Cardiac septum (tissue), 1 donor: ENCODE measurements at regions of chr22 and their contacts with region 1.

Region 1: DNA sequence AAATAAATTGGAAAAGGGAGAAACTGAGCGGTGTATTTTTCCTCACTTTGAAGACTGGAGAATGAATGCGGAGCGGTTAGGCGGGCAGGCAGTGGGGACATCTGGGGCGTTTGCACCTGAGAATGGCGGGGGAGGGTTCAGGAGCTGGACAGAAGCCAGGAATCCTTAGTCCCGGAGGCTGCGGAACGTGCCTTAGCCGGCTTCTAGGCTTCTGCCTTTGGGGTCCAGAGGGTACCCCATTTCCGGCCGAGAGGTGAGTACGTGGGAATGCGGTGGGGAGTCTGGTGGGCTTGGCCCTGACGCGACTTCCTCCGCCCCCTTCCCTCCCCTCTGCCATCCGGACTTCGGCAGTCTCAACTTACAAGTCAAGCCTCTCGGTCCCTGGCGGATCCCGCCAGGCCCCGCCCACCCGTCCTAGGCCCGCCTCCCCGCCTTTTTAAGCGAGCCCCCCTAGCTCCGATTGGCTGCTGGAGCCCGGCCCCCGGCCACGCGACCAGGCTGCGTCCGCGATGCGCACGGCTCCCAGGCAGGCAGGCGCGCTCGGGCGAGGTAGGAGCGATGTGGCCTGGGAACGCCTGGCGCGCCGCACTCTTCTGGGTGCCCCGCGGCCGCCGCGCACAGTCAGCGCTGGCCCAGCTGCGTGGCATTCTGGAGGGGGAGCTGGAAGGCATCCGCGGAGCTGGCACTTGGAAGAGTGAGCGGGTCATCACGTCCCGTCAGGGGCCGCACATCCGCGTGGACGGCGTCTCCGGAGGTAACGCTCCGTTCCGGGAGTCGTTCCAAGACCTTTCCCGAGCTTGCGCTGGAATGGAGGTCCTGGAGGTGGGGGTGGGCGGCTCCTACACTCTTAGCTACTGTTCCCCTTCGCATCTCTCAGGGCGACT is at the start of gene GCAT:
- DNase-seq: peak; percentile 97
- total RNA-seq, gene GCAT: 24.0 TPM

Region 2: DNA sequence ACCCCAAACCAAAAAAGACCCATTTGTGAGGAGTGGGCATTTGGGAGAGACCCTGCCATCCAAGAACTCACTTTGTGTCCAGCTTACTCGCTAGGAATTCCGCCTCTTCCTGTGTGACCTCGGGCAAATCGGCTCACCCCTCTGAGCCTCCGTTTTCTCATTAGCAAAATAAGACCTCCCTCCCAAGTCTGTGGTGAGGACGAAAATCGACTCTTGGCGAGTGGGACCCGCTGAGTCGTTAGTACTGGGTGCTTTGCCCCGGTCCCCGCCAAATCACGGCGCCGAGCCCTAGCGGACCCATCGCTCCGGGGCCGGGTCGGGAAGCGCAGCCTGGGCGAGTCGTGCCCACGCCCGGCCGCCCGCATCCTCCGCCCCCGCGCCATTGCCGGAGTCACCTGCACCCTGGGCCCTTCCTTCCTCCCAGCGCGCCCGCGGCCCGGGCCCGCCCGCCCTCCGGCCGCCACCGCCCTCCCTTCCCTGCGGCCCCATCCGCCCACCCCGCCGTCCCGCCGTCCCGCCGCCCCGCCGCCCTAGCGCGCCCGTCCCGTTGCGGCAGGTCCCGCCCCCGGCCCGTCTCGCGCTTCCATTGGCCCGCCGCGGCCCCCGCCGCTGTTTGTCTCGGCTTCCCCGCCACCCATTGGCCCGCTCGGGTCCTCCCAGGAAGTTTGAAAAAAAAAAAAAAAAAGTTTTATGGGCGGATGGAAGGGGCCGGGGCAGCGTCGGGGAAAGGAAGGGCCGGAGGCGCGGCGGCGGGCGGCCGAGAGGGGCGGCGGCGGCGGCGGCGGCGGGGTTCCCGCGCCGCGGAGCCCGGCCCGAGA is 61.9 kb before region 1 on chr22:
- intact Hi-C with region 1: loop called (anchors 5 kb)
- DNase-seq: peak; percentile 96

Region 3: DNA sequence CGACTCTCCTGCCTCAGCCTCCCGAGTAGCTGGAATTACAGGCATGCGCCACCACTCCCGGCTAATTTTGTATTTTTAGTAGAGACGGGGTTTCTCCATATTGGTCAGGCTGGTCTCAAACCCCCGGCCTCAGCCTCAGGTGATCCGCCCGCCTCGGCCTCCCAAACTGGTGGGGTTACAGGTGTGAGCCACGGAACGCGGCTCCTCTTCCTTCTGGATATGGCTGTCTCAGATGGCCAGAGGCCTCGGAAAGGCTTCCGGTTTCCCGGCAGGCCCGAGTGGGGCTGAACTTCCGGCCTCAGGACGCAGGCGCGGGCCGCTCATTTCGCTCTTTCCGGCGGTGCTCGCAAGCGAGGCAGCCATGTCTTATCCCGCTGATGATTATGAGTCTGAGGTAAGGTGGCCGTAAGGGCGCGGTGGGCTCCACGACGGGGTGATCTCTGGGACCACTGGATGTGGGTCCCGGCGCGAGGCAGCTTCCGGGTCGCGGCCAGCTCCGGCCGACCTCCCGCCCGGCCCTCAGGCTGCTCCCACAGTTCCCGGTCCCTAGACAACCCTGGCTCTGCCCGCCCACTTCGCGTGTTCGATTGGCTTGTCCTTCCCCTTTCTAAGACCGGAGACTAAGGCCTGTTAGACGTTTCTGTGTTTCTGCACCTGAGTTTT is 41.6 kb after region 1 on chr22 and contains the start of gene EIF3L:
- intact Hi-C with region 1: loop called (anchors 5 kb)
- DNase-seq: peak; percentile 98
- total RNA-seq, gene EIF3L: 255 TPM